ENCODE measurements at regions of chr2 and their contacts with region 1.

Region 1: DNA sequence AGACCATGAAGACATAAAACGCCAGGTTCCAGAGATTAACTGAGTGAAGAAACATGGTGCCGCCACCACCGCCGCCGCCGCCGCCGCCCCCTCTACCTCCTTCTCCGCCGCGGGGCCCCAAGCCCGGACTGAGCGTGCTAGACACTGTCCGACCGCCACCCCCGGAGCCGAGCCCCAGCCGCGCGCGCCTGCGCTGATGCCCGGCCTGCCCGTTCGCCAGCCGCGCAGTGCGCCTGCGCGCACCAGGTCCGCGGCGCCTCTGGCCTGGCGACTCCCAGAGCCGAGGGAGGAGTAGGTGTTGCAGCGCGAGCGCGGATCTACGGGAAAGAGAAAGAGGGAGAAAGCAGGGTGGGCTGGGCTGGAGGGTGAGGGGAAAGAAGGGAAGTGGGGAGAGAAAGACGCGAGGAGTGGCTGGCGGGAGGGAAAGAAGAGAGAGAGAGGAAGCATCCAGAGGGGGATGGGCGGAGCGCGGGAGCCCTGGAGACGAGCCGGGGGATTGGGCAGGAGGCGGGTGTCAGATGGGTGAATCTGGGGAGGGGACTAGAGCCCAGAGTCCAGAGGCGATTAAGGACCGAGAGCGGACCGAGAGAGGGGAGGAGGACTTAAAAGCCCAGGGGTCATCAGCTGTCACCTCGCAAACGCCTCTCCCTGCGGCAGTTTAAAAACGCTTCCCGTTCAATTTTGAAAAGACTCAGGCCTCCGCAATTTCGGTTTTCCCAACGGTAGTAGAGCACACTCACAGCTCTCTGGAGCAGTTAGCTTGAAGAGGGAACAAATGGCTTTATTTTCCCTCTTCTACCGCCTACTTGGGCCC is at the start of gene PGAP1:
- DNase-seq: peak; percentile 96
- H3K4me3 ChIP-seq: peak within 1 kb of the TSS; percentile 97 to 100 (median 97)
- H3K27ac ChIP-seq: peak within 1 kb of the TSS; percentile 83
- H3K4me1 ChIP-seq: peaks cover 26% of the 10 kb centered on the region
- H3K27me3 ChIP-seq: no peaks in the 10 kb centered on the region
- CTCF ChIP-seq: no peak
- POLR2A ChIP-seq: peak; percentile 81
- total RNA-seq, gene PGAP1: 9.8 and 13.0 TPM in 2 replicates

Region 2: DNA sequence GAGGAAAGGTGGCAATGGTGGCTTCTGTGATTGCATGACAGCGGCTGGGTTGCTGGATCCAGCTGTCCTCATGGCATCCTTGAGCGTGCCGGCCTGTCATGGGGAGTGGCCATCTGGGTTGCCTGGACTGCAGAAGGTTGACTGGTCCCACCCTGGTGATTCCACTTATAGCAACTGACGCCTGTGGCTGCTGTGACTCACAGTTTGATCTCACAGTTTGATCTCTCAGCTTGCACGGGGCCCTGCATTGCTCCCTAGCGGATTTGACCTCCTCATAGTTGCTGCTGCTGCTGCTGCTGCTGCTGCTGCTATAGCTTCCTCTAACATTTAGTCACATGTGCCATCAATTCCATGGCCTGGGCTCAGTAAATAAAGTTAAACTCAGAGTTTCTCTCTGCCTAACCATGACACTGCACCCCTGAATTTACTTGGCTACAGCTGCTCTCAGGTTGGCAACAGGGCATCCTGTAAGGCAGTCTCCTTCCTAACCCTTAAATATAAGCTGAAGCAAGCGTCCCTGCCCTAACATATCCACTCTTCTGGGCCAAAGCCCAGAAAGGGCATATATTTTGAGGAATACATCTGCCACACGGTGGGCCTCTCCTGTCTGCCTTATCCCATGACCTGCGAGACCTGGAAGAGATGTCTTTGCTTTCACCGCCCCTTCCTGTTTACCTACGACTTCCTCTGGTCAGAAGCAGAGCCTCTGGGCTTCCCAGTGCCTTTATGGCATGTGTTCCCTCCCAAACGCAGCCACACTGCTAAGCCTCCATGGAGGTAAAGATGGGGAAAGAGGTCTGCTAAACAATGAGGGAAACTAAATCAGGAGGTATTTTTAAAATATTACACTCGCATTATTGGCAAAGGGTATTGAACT is 325.1 kb before region 1 on chr2:
- CTCF ChIA-PET with region 1: no interaction called
- POLR2A ChIA-PET with region 1: no interaction called
- dilution Hi-C with region 1: no loop called
- intact Hi-C with region 1: loop called (anchors 10 kb)
- DNase-seq: peak; percentile 88
- H3K4me3 ChIP-seq: no peak overlapping the region
- H3K27ac ChIP-seq: peak overlapping the region; percentile 82
- H3K4me1 ChIP-seq: peaks cover 25% of the 10 kb centered on the region
- H3K27me3 ChIP-seq: no peaks in the 10 kb centered on the region
- CTCF ChIP-seq: no peak
- POLR2A ChIP-seq: no peak

Region 3: DNA sequence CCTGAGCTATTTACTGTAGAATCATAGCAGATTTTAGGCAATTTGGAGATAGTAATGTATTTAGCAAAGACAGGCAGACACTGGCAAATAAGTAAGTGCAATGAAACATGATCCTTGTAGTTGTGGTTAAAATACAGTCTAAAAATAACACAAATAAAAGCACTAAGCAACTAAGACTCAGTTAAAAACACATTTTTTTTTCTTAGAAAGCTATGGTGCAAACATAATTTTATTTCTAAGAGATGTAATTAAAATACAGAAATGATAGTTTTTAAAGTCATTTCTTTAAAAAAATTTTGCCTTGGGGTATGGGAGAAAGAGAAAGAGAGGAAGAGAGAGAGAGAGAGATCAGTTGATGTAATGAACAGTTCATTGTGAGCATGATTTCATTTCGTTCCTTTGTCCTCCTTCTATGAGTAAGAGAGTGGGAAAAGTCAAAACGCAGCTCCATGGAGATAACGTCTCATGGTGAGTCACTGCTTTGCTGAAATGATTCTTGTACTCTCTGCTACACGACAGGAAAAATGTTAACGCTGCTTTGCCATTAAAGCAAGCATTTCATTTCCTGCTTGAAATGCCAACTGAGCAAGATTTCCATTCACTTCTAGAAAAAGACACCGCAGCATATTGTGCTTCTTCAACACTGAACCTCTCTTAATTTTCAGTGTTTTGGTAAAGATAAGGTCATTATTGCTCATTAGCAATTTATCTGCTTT is 61.0 kb after region 1 on chr2:
- CTCF ChIA-PET with region 1: interaction called, 9 read pairs
- POLR2A ChIA-PET with region 1: no interaction called
- dilution Hi-C with region 1: no loop called
- intact Hi-C with region 1: loop called (anchors 1 kb)
- DNase-seq: peak; percentile 98
- H3K4me3 ChIP-seq: peak overlapping the region in 1 of 3 experiments; percentile 24
- H3K27ac ChIP-seq: peak overlapping the region; percentile 93
- H3K4me1 ChIP-seq: peaks cover 18% of the 10 kb centered on the region
- H3K27me3 ChIP-seq: no peaks in the 10 kb centered on the region
- CTCF ChIP-seq: no peak
- POLR2A ChIP-seq: peak; percentile 47

Region 4: DNA sequence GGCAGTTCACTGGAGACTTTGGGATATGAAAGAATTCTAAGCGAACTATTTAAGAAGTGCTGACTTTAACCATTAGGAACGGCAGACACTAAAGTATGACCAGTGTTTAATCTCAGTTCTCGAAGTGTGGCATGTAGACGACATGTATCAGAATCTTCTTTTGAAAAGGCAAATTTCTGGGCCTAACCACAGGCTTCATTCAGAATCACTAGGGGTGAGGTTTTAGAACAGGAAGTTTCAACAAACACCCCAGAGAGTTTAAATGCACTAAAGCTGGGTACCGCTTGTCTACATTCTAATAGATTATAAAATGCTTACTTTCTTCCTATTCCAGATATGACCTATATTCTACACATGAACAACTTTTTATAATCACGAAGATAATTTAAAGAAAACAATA is 203.5 kb after region 1 on chr2:
- CTCF ChIA-PET with region 1: no interaction called
- POLR2A ChIA-PET with region 1: no interaction called
- dilution Hi-C with region 1: no loop called
- intact Hi-C with region 1: loop called (anchors 10 kb)
- DNase-seq: no peak
- H3K4me3 ChIP-seq: no peak overlapping the region
- H3K27ac ChIP-seq: no peak overlapping the region
- H3K4me1 ChIP-seq: no peaks in the 10 kb centered on the region
- H3K27me3 ChIP-seq: no peaks in the 10 kb centered on the region
- CTCF ChIP-seq: no peak
- POLR2A ChIP-seq: no peak

Region 5: GRCh38 chr2:197159661-197160211 is 233.0 kb after region 1 on chr2:
- CTCF ChIA-PET with region 1: no interaction called
- POLR2A ChIA-PET with region 1: no interaction called
- dilution Hi-C with region 1: no loop called
- intact Hi-C with region 1: loop called (anchors 5 kb)
- DNase-seq: peak; percentile 95
- H3K4me3 ChIP-seq: peak overlapping the region in 1 of 3 experiments; percentile 48
- H3K27ac ChIP-seq: peak overlapping the region; percentile 95
- H3K4me1 ChIP-seq: peaks cover 47% of the 10 kb centered on the region
- H3K27me3 ChIP-seq: no peaks in the 10 kb centered on the region
- CTCF ChIP-seq: no peak
- POLR2A ChIP-seq: no peak

Region 6: DNA sequence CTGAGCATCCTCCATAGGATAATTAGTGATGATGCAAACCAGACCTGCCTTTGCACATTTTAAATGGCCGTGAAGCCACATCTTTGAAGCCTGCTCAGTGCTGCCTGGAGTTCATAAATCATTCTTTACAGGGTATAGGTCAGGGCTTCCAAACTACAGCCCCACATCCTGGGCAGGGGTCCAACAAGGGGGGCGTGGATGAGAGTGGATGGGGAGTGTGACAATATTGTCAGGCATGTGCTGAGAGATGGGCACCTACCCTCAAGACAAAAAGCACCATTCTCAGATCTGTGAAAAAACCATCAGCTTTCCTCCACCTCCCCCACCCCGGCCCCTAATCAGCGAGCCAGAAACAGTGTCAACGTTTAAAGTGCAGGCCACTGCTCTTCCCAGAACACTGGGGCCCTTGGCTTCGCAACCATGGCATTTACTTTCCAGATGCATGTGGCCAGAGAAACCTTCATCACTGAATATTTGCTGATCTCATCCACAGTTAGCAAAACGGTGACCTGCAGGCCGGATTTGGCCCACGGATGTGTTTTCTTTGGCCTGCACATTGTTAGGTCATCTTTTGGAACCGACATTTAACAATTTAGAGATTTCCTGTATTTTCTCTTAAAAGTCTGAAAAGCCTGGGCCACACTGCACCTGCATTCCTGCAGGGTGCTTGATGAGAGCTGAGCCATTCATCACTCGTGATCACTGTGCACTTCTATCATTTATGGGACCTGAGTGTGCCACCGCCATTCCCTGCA is 253.2 kb after region 1 on chr2:
- CTCF ChIA-PET with region 1: no interaction called
- POLR2A ChIA-PET with region 1: no interaction called
- dilution Hi-C with region 1: no loop called
- intact Hi-C with region 1: loop called (anchors 2 kb)
- DNase-seq: peak; percentile 82
- H3K4me3 ChIP-seq: no peak overlapping the region
- H3K27ac ChIP-seq: peak overlapping the region; percentile 76
- H3K4me1 ChIP-seq: peaks cover 15% of the 10 kb centered on the region
- H3K27me3 ChIP-seq: no peaks in the 10 kb centered on the region
- CTCF ChIP-seq: no peak
- POLR2A ChIP-seq: no peak

Region 7: GRCh38 chr2:197310271-197310985 is 383.7 kb after region 1 on chr2 and contains the start of gene ANKRD44:
- CTCF ChIA-PET with region 1: no interaction called
- POLR2A ChIA-PET with region 1: no interaction called
- dilution Hi-C with region 1: no loop called
- intact Hi-C with region 1: loop called (anchors 2 kb)
- DNase-seq: peak; percentile 72
- H3K4me3 ChIP-seq: peak within 1 kb of the TSS; percentile 65 to 91 (median 85)
- H3K27ac ChIP-seq: no peak within 1 kb of the TSS
- H3K4me1 ChIP-seq: peaks cover 12% of the 10 kb centered on the region
- H3K27me3 ChIP-seq: peaks cover 11 to 16% of the 10 kb centered on the region in 2 experiments
- CTCF ChIP-seq: no peak
- POLR2A ChIP-seq: no peak
- total RNA-seq, gene ANKRD44: 6.1 and 8.1 TPM in 2 replicates

Measured in endothelial cell of umbilical vein (primary cell).